Caco-2 (cell line): ENCODE measurements at regions of chr12 and their contacts with region 1.

Region 1: GRCh38 chr12:95473884-95474659 is at the start of gene METAP2:
- DNase-seq: peak; percentile 97 to 98
- H3K4me3 ChIP-seq: peak within 1 kb of the TSS; percentile 99
- H3K4me3 Mint-ChIP-seq: peak within 1 kb of the TSS; percentile 93
- H3K27ac Mint-ChIP-seq: peak within 1 kb of the TSS; percentile 97
- H3K4me1 ChIP-seq: peaks cover 13% of the 10 kb centered on the region
- H3K4me1 Mint-ChIP-seq: peaks cover 27% of the 10 kb centered on the region
- H3K27me3 ChIP-seq: no peaks in the 10 kb centered on the region
- H3K27me3 Mint-ChIP-seq: no peaks in the 10 kb centered on the region
- CTCF ChIP-seq: no peak
- total RNA-seq, gene METAP2: 134 and 138 TPM in 2 replicates

Region 2: GRCh38 chr12:95446506-95446900 is 27.6 kb before region 1 on chr12:
- CTCF ChIA-PET with region 1: interaction called, 3 read pairs
- POLR2A ChIA-PET with region 1: interaction called, 28 read pairs
- intact Hi-C with region 1: loop called (anchors 1 kb)
- DNase-seq: peak; percentile 87 to 88
- H3K4me3 ChIP-seq: peak overlapping the region; percentile 34
- H3K4me3 Mint-ChIP-seq: peak overlapping the region; percentile 74
- H3K27ac Mint-ChIP-seq: peak overlapping the region; percentile 93
- H3K4me1 ChIP-seq: peaks cover 44% of the 10 kb centered on the region
- H3K4me1 Mint-ChIP-seq: peaks cover 48% of the 10 kb centered on the region
- H3K27me3 ChIP-seq: no peaks in the 10 kb centered on the region
- H3K27me3 Mint-ChIP-seq: no peaks in the 10 kb centered on the region
- CTCF ChIP-seq: no peak

Region 3: GRCh38 chr12:95492462-95492861 is 18.4 kb after region 1 on chr12:
- CTCF ChIA-PET with region 1: no interaction called
- POLR2A ChIA-PET with region 1: no interaction called
- intact Hi-C with region 1: no loop called
- DNase-seq: no peak
- H3K4me3 ChIP-seq: no peak overlapping the region
- H3K4me3 Mint-ChIP-seq: no peak overlapping the region
- H3K27ac Mint-ChIP-seq: no peak overlapping the region
- H3K4me1 ChIP-seq: no peaks in the 10 kb centered on the region
- H3K4me1 Mint-ChIP-seq: no peaks in the 10 kb centered on the region
- H3K27me3 ChIP-seq: no peaks in the 10 kb centered on the region
- H3K27me3 Mint-ChIP-seq: no peaks in the 10 kb centered on the region
- CTCF ChIP-seq: no peak